ENCODE measurements at regions of chr4 and their contacts with region 1.

Region 1: GRCh38 chr4:109433205-109434006 is at the start of gene SEC24B:
- DNase-seq: peak; percentile 49
- H3K4me3 ChIP-seq: peak within 1 kb of the TSS; percentile 85 to 93 (median 86)
- H3K27ac ChIP-seq: peak within 1 kb of the TSS; percentile 92 to 97 (median 96)
- H3K4me1 ChIP-seq: peaks cover 24 to 54% (median 31%) of the 10 kb centered on the region in 3 donors
- H3K27me3 ChIP-seq: no peaks in the 10 kb centered on the region
- CTCF ChIP-seq: peak; percentile 71 to 98 (median 96)
- POLR2A ChIP-seq: peak in 2 of 4 donors; percentile 71 to 85
- total RNA-seq, gene SEC24B: 20.4 to 38.5 (median 29.1) TPM

Region 2: GRCh38 chr4:109205186-109205585 is 228.2 kb before region 1 on chr4:
- intact Hi-C with region 1: no loop called
- DNase-seq: no peak
- H3K4me3 ChIP-seq: no peak overlapping the region
- H3K27ac ChIP-seq: no peak overlapping the region
- H3K4me1 ChIP-seq: no peaks in the 10 kb centered on the region
- H3K27me3 ChIP-seq: no peaks in the 10 kb centered on the region
- CTCF ChIP-seq: no peak
- POLR2A ChIP-seq: no peak

Region 3: DNA sequence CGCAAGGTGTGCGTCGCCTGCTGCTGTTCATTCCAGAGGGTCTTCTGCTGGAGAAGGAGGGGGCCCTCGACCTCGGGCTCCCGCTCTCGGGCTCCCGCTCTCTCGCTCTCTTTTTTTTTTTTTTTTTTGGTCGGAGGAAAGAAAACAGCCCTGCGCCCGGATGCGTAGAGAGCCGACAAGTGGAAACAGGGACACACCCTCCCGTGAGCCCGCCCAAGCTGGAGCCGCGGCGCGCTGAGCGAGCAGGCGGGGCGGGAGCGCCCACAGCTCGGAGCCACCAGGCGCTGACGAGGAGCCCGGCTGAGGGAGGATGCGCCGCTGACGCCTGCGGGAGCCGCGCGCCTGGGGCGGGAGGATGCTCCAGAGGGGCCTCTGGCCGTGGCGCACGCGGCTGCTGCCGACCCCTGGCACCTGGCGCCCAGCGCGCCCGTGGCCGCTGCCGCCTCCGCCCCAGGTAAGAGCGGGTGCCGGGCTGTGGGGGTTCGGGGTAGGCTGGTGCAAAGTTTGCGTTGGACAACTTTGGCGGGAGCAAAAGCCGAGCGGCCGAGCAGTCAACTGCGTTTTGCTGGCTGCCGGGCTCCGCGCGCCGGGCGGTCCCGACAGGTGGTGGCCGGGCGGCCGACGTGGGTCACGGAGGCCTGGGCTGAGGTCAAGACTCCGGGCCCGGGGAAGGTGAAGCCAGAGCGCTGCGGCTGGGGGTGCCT is 126.7 kb after region 1 on chr4 and contains the start of gene MCUB:
- intact Hi-C with region 1: loop called (anchors 10 kb)
- DNase-seq: peak; percentile 41
- H3K4me3 ChIP-seq: peak within 1 kb of the TSS; percentile 70 to 96 (median 86)
- H3K27ac ChIP-seq: peak within 1 kb of the TSS; percentile 86 to 97 (median 94)
- H3K4me1 ChIP-seq: peaks cover 10 to 31% (median 14%) of the 10 kb centered on the region in 3 donors
- H3K27me3 ChIP-seq: no peaks in the 10 kb centered on the region
- CTCF ChIP-seq: peak in 2 of 6 experiments; percentile 17 to 27
- POLR2A ChIP-seq: peak in 2 of 4 donors; percentile 81 to 87
- total RNA-seq, gene MCUB: 18.7 to 34.5 (median 22.2) TPM

Region 4: GRCh38 chr4:109729718-109730618 is 296.6 kb after region 1 on chr4 and contains the start of gene PLA2G12A:
- intact Hi-C with region 1: loop called (anchors 10 kb)
- DNase-seq: peak; percentile 15
- H3K4me3 ChIP-seq: peak within 1 kb of the TSS; percentile 78 to 94 (median 83)
- H3K27ac ChIP-seq: peak within 1 kb of the TSS; percentile 88 to 91 (median 89)
- H3K4me1 ChIP-seq: peaks cover 3 to 31% (median 5%) of the 10 kb centered on the region in 3 donors
- H3K27me3 ChIP-seq: no peaks in the 10 kb centered on the region
- CTCF ChIP-seq: no peak
- POLR2A ChIP-seq: peak in 3 of 4 donors; percentile 18 to 85 (median 55)
- total RNA-seq, gene PLA2G12A: 10.8 to 66.6 (median 25.2) TPM